Motor neuron (in vitro differentiated cells): ENCODE measurements at regions of chr2 and their contacts with region 1.

Region 1: GRCh38 chr2:234792621-234793022 is 159.2 kb upstream of the SH3BP4 start:
- ATAC-seq: peak in 5 of 8 experiments; percentile 65 to 87 (median 83)
- H3K4me3 ChIP-seq: no peak overlapping the region
- H3K27ac ChIP-seq: peak overlapping the region; percentile 67 to 74
- H3K4me1 ChIP-seq: peaks cover 74 to 82% of the 10 kb centered on the region in 2 donors

Region 2: DNA sequence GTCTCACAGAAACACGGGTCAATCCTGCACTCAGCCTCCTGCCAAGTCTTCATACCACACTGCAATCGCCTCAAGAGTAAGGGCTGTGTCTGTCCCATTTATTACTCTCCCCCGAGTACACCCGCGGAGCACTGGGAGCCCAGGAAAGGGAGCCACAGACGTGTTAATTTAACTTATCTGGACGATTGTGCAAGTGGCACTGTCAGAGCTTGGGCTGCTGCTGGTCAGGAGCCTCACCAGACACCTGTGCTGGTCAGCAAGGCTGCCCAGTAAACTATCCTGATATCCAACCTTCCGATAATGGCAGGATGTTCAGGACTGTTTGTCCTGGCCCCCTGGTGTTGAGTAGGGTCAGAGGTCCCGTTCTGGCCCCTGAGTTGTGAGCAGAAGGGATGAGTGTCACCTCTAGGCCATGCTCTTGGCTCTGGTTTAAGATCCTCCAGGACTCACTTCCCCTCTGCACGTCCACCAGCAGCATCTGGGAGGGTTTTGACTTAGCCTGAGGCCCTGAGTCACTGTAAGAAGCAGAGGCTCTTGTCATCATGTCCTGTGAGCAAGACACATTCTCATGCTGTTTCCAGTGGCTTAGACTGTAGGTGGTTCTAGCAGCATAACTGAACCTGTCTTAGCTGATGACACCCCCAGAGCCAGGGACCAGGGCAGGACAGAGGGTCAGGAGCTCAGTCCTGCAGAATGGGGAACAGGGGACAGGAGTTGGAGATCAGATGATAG is 213.2 kb before region 1 on chr2:
- in situ Hi-C with region 1: loop called in 1 of 9 experiments (anchors 25 kb)
- ATAC-seq: peak in 6 of 8 experiments; percentile 16 to 66 (median 34)
- H3K4me3 ChIP-seq: no peak overlapping the region
- H3K27ac ChIP-seq: no peak overlapping the region
- H3K4me1 ChIP-seq: peaks cover 6 to 8% of the 10 kb centered on the region in 2 donors